ENCODE measurements at regions of chr9 and their contacts with region 1.

Region 1: GRCh38 chr9:75088260-75088905 is at the start of gene OSTF1:
- DNase-seq: peak; percentile 86
- ATAC-seq: peak; percentile 86
- H3K4me3 ChIP-seq: peak within 1 kb of the TSS; percentile 85 to 98 (median 91)
- H3K27ac ChIP-seq: peak within 1 kb of the TSS; percentile 98
- H3K4me1 ChIP-seq: peaks cover 78% of the 10 kb centered on the region
- H3K27me3 ChIP-seq: no peaks in the 10 kb centered on the region; a peak in 1 of 5 replicates
- CTCF ChIP-seq: no peak
- EP300 ChIP-seq: no peak
- POLR2A ChIP-seq: peak; percentile 43 to 44; a peak in 2 of 4 replicates
- RAD21 ChIP-seq: peak; percentile 17; the same call in 1 of the 2 replicates
- total RNA-seq, gene OSTF1: 39.0 and 54.5 TPM in 2 replicates

Region 2: DNA sequence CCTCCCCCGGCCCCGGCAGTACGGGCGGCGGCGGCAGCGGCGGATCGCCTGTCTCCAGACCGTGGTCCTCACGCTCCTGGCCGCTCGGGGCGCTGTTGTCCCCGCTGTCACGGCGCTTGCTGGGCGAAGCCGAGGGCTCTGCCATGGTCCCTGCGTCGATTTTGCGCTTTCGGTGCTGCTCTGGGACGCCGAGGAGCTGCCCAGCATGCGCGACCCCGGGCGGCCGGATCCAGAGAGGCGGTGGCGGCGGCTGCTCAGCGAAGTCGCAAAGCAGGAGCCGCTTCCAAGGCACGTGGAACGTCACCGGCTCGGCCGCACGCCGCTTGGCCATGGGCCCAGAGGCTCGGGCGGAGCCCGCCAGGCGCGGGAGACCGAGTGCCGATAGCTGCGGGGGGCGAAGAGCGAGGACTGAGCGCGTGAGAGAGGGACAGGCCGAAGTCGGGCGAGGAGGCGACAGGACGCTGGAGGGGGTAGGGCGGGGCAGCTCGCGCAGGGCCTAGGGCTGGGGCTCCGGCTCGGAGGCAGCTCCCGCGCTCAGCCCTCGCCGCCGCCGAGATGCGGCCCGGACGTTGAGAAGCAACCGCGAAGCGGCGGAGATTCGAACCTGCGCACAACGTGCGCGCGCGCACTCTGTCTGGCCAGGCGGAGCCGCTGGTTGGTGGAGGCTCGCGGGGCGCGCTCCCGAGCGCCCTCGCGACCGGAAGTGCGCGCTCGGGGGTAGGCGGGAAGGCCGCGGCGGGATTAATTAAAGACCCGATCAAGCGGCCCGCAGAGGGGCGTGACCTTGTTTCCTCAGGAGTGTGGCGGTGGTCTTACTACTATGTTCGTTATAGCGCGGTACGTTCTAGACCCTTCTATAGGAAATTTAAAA is 135.9 kb before region 1 on chr9 and contains the start of gene C9orf40:
- CTCF ChIA-PET with region 1: no interaction called
- POLR2A ChIA-PET with region 1: interaction called, 4 read pairs
- in situ Hi-C with region 1: loop called (anchors 5 kb)
- intact Hi-C with region 1: loop called (anchors 5 kb)
- DNase-seq: peak; percentile 70
- ATAC-seq: peak; percentile 96
- H3K4me3 ChIP-seq: peak within 1 kb of the TSS; percentile 89 to 97 (median 89)
- H3K27ac ChIP-seq: peak within 1 kb of the TSS; percentile 99
- H3K4me1 ChIP-seq: peaks cover 33% of the 10 kb centered on the region
- H3K27me3 ChIP-seq: no peaks in the 10 kb centered on the region; a peak in 1 of 5 replicates
- CTCF ChIP-seq: peak; percentile 91
- EP300 ChIP-seq: no peak
- POLR2A ChIP-seq: peak; percentile 42 to 67; a peak in 3 of 4 replicates
- RAD21 ChIP-seq: peak; percentile 63
- total RNA-seq, gene C9orf40: 13.5 and 16.5 TPM in 2 replicates

Region 3: GRCh38 chr9:75001719-75002422 is 86.5 kb before region 1 on chr9:
- CTCF ChIA-PET with region 1: no interaction called
- POLR2A ChIA-PET with region 1: no interaction called
- in situ Hi-C with region 1: no loop called
- intact Hi-C with region 1: loop called (anchors 1 kb)
- DNase-seq: peak; percentile 99
- ATAC-seq: peak; percentile 99
- H3K4me3 ChIP-seq: peak overlapping the region in 2 of 3 experiments; percentile 15 to 43; a peak in 3 of 6 replicates
- H3K27ac ChIP-seq: peak overlapping the region; percentile 91
- H3K4me1 ChIP-seq: peaks cover 38% of the 10 kb centered on the region
- H3K27me3 ChIP-seq: no peaks in the 10 kb centered on the region
- CTCF ChIP-seq: peak; percentile 90
- EP300 ChIP-seq: peak in 1 of 2 experiments; percentile 94; a peak in 2 of 4 replicates
- POLR2A ChIP-seq: 0 out of 4 replicates have a peak, but pooled peaks of 1 of the 2 experiments have one; percentile 46
- RAD21 ChIP-seq: peak; percentile 89

Region 4: GRCh38 chr9:75185585-75186170 is 97.3 kb after region 1 on chr9:
- CTCF ChIA-PET with region 1: no interaction called
- POLR2A ChIA-PET with region 1: interaction called, 3 read pairs
- in situ Hi-C with region 1: no loop called
- intact Hi-C with region 1: loop called (anchors 5 kb)
- DNase-seq: peak; percentile 16
- ATAC-seq: peak; percentile 89
- H3K4me3 ChIP-seq: no peak overlapping the region
- H3K27ac ChIP-seq: no peak overlapping the region
- H3K4me1 ChIP-seq: no peaks in the 10 kb centered on the region
- H3K27me3 ChIP-seq: no peaks in the 10 kb centered on the region
- CTCF ChIP-seq: peak; percentile 61
- EP300 ChIP-seq: no peak
- POLR2A ChIP-seq: no peak
- RAD21 ChIP-seq: no peak

Measured in HepG2 (cell line).